Esophagus muscularis mucosa (tissue), 4 donors: ENCODE measurements at regions of chr6 and their contacts with region 1.

Region 1: DNA sequence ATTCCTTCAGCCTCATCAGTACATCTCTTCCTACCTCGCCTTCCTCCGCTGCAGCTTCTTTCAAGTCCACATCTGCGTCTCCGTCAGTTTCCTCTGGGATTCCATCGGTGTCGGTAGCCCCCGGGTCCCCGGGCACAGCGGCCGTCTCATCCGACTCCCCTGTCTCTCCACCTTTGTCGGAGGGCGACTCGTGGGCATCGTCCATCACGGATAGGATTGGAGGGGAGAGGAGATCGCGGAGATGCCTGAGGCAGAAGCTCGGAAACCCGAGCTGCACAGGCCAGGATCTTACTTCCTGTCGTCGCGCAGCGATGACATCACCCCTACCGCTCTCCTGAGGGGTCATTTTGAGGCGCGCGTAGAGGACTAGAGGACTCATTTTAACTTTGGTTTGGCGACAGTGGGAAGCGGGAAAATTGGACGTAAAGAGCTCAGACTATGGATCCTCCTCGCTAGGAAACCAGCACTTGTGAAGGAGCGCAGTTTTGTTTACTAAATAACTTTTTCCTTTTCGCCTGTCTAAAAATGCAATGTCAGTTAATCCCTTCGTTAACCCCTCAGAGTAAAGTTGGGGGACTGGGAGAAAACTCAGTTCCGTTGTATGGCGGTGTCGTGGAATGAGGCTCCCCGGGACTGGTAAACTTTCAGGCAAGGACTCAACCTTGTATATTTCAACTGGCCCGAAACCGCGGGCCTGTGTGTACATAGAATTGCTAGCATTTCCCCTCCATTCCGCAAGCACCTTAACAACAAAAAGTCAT is at the start of gene TAF11:
- DNase-seq: peak; percentile 98
- H3K4me3 ChIP-seq: peak within 1 kb of the TSS; percentile 75 to 86 (median 78)
- H3K27ac ChIP-seq: peak within 1 kb of the TSS; percentile 85 to 92 (median 90)
- H3K4me1 ChIP-seq: peaks cover 21 to 60% (median 40%) of the 10 kb centered on the region in 4 donors
- H3K27me3 ChIP-seq: no peaks in the 10 kb centered on the region
- CTCF ChIP-seq: peak in 1 of 3 experiments; percentile 31
- EP300 ChIP-seq: no peak
- POLR2A ChIP-seq: peak; percentile 53
- total RNA-seq, gene TAF11: 18.2 to 26.2 (median 25.4) TPM

Region 2: DNA sequence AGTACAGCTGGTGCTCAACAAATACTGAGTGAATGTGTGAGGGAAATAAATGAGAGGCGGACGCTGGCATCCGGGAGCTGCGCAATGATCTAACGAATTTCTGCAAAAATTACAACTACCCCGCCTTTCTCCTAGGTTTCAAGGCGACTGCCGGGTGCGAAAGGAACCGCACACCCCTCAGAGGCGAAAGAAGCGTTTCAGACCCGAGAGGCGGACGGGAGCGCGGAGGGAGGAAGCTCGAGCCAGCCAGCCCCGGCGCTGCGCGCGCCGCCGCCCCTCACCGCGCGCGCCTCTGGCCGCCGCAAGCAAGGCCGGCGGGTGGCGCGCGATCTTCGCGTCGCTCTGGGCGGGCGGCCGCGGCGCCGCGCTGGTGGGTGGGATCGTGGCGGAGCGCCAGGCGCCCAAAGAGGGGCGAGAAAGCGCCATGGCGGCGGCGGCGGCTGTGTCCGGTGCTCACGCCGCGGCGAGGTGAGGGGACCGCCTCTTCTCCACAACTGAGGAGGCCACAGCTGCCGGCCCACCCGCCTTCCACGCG is 96.2 kb before region 1 on chr6 and contains the start of gene BLTP3A:
- intact Hi-C with region 1: loop called (anchors 5 kb)
- DNase-seq: peak; percentile 92
- H3K4me3 ChIP-seq: peak within 1 kb of the TSS; percentile 82 to 94 (median 87)
- H3K27ac ChIP-seq: peak within 1 kb of the TSS; percentile 90 to 97 (median 93)
- H3K4me1 ChIP-seq: peaks cover 19 to 32% (median 20%) of the 10 kb centered on the region in 4 donors
- H3K27me3 ChIP-seq: no peaks in the 10 kb centered on the region
- CTCF ChIP-seq: peak in 1 of 3 experiments; percentile 23
- EP300 ChIP-seq: no peak
- POLR2A ChIP-seq: no peak
- total RNA-seq, gene BLTP3A: 7.5 to 13.1 (median 9.8) TPM